ENCODE measurements at regions of chr3 and their contacts with region 1.

Region 1: DNA sequence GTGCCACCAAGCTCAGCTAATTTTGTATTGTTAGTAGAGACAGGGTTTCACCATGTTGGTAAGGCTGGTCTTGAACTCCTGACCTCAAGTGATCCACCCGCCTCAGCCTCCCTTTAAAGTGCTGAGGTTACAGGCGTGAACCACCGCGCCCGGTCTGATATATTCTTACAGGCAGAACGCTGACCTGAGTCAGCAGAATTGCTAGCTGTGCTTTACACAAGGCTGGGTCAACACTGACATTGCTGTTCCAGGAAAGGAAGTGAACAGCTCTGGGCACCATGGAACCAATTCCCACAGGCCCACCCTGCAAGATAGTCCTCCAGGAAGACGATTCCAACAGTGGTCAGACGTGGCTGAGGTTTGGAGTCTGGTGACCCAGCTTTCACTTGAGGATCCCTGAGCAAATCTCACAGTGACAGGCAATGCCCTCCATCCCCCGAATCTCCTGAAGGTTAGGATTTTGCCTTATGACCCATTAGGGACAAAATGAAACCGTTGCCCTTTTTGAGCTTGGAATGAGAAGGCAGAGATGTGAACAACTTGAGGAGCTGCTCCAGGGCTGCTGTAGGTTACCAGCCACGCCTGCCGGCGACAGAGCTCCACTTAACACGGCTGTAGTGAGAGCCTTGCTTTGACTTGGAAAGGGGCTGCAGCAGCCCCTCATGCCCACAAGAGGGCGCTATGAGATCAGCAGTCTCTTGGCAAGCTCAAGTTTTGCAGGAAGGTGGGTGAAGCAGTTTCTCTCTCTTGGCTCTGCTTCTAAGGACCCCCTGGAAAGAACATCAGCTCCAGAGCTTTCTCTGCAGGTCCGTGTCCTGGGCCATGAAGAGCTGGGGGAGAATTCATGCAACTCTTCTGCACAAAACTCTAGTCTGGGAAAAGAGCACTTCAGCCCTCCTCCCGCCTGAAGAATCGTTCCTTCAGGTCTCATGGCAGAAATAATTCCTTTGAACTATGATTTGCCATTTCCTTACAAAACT is 74.1 kb downstream of the SENP2 start:
- DNase-seq: peak; percentile 84
- H3K4me3 Mint-ChIP-seq: no peak overlapping the region
- H3K27ac Mint-ChIP-seq: peak overlapping the region; percentile 86
- H3K4me1 Mint-ChIP-seq: peaks cover 53% of the 10 kb centered on the region
- H3K27me3 Mint-ChIP-seq: no peaks in the 10 kb centered on the region
- CTCF ChIP-seq: peak; percentile 97

Region 2: GRCh38 chr3:185489462-185489861 is 170.8 kb before region 1 on chr3:
- CTCF ChIA-PET with region 1: no interaction called
- POLR2A ChIA-PET with region 1: no interaction called
- intact Hi-C with region 1: no loop called
- DNase-seq: no peak
- H3K4me3 Mint-ChIP-seq: no peak overlapping the region
- H3K27ac Mint-ChIP-seq: no peak overlapping the region
- H3K4me1 Mint-ChIP-seq: peaks cover 5% of the 10 kb centered on the region
- H3K27me3 Mint-ChIP-seq: no peaks in the 10 kb centered on the region
- CTCF ChIP-seq: no peak

Region 3: DNA sequence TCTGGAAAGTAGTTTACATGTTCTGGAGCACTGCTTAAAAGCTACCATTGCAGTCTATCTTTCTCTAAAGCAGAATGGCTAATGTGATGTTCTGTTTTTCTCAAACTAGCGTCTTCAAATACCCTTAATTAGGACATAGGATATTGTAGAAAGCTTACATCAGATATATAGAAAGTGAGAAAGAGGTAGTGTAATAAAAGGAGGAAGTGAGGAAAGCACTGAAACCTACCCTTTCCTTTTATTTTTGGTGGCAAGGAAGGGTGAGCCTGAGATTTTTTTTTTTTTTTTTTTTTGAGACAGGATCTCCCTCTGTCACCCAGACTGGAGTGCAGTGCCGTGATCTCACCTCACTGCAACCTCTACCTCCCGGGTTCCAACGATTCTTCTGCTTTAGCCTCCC is 64.7 kb before region 1 on chr3:
- CTCF ChIA-PET with region 1: interaction called, 11 read pairs
- POLR2A ChIA-PET with region 1: interaction called, 3 read pairs
- intact Hi-C with region 1: no loop called
- DNase-seq: no peak
- H3K4me3 Mint-ChIP-seq: no peak overlapping the region
- H3K27ac Mint-ChIP-seq: no peak overlapping the region
- H3K4me1 Mint-ChIP-seq: no peaks in the 10 kb centered on the region
- H3K27me3 Mint-ChIP-seq: no peaks in the 10 kb centered on the region
- CTCF ChIP-seq: no peak

Region 4: DNA sequence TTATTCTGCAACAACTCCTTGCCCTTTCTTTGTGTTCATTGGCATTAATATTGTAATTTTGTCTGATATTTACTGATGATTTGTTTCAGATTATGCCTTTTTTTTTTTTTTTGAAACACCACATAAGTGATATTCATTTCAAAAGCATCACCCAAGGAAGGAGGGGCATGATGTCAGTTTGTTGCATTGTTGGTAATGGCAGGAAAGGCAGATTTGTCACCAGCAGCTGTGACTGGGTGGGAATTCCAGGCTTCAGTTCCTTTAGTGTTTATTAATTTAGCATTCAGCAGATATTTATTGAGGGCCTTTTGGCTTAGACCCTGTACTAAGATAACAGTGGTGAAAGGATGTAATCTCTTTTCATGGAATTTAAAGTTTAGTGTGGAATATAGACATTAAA is 54.7 kb before region 1 on chr3:
- CTCF ChIA-PET with region 1: no interaction called
- POLR2A ChIA-PET with region 1: no interaction called
- intact Hi-C with region 1: no loop called
- DNase-seq: no peak
- H3K4me3 Mint-ChIP-seq: no peak overlapping the region
- H3K27ac Mint-ChIP-seq: no peak overlapping the region
- H3K4me1 Mint-ChIP-seq: no peaks in the 10 kb centered on the region
- H3K27me3 Mint-ChIP-seq: no peaks in the 10 kb centered on the region
- CTCF ChIP-seq: no peak

Region 5: DNA sequence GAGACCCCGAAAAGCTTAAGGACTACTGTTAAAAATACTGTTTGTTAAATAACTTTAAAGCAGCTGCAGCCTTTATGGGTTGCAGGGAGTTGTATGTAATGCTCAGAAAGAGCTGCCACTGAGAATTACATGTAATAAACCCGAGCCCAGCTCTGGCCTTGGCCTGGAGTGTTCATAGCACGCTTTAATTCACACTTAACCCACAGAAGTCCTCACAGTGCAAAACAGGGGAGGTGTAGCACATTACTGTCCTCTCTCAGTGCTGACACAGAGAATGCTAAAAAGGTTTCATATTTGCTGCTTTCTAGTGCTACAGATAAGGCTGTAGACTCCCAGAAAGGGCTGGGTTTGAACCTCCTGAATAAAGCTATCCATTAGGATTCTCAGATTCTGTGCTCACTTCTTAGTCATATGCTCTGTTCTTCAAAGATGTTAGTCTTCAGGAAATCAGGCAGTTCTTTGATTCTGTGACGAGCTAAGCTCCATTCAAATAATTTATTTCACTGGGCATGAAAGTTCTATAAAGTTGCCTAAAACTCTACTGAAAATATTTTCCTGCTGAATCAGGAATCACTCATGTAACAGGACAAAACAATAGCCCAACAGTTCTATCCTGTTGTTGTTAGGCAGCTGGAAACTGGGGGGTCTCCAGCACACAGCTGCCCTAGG is 33.9 kb after region 1 on chr3:
- CTCF ChIA-PET with region 1: interaction called, 10 read pairs
- POLR2A ChIA-PET with region 1: interaction called, 10 read pairs
- intact Hi-C with region 1: no loop called
- DNase-seq: no peak
- H3K4me3 Mint-ChIP-seq: no peak overlapping the region
- H3K27ac Mint-ChIP-seq: peak overlapping the region; percentile 35
- H3K4me1 Mint-ChIP-seq: peaks cover 8% of the 10 kb centered on the region
- H3K27me3 Mint-ChIP-seq: no peaks in the 10 kb centered on the region
- CTCF ChIP-seq: no peak

Region 6: DNA sequence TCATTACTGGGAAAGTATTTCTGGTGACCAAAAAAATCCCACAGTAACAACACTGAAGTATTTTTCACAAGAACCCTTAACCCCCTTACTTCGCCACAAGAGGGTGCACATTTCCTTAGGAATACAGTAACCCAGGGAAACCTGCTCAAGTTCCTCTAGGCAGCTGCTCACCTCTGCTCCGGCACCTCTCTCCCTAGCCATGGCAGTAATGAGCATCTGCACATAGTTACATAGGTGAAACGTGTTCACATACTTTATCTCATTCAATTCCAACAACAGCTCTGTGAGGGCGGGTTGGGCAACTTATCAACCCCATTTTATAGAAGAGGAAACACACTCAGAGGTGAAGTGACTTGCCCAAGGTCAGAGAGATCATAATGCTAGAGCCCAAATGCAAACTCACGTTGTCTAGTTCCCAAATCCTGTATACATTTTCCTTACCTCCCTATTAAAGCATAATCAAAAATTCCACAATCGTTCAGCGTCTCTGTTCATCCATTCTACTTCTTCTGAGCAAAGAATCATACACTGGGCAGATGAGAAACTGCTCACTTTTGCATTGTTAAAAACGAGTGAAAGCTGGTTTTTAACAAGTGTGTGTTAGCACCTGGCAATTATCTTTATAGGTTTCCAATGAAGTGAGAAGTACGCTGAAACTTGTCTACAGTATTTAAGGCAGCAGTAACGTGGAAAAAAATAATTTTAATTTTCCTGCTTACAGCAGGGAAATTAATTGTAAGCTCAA is 73.9 kb after region 1 on chr3:
- CTCF ChIA-PET with region 1: interaction called, 59 read pairs
- POLR2A ChIA-PET with region 1: interaction called, 55 read pairs
- intact Hi-C with region 1: loop called (anchors 1 kb)
- DNase-seq: peak; percentile 93
- H3K4me3 Mint-ChIP-seq: no peak overlapping the region
- H3K27ac Mint-ChIP-seq: peak overlapping the region; percentile 68
- H3K4me1 Mint-ChIP-seq: peaks cover 51% of the 10 kb centered on the region
- H3K27me3 Mint-ChIP-seq: no peaks in the 10 kb centered on the region
- CTCF ChIP-seq: peak; percentile 58

Region 7: DNA sequence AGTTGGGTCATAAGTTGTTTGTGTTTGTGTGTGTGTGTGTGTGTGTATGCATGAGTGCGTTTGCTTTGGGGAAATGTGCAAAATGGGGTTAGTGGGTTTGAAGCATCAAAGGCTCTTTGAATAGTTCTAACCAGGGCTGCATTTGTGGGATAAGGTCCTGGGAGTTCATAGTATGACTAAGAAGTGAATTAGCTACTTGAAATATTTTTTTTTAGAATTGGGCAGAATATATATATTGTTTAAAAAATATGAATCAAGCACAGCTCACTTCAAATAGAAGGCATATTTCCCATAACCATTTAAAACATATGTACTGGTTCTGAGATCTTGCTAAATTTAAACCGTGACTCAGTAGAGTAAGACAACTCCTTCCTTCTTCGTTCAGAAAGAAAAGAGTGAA is 121.5 kb after region 1 on chr3:
- CTCF ChIA-PET with region 1: interaction called, 13 read pairs
- POLR2A ChIA-PET with region 1: interaction called, 6 read pairs
- intact Hi-C with region 1: no loop called
- DNase-seq: peak; percentile 24
- H3K4me3 Mint-ChIP-seq: no peak overlapping the region
- H3K27ac Mint-ChIP-seq: peak overlapping the region; percentile 19
- H3K4me1 Mint-ChIP-seq: peaks cover 53% of the 10 kb centered on the region
- H3K27me3 Mint-ChIP-seq: no peaks in the 10 kb centered on the region
- CTCF ChIP-seq: no peak

Region 8: DNA sequence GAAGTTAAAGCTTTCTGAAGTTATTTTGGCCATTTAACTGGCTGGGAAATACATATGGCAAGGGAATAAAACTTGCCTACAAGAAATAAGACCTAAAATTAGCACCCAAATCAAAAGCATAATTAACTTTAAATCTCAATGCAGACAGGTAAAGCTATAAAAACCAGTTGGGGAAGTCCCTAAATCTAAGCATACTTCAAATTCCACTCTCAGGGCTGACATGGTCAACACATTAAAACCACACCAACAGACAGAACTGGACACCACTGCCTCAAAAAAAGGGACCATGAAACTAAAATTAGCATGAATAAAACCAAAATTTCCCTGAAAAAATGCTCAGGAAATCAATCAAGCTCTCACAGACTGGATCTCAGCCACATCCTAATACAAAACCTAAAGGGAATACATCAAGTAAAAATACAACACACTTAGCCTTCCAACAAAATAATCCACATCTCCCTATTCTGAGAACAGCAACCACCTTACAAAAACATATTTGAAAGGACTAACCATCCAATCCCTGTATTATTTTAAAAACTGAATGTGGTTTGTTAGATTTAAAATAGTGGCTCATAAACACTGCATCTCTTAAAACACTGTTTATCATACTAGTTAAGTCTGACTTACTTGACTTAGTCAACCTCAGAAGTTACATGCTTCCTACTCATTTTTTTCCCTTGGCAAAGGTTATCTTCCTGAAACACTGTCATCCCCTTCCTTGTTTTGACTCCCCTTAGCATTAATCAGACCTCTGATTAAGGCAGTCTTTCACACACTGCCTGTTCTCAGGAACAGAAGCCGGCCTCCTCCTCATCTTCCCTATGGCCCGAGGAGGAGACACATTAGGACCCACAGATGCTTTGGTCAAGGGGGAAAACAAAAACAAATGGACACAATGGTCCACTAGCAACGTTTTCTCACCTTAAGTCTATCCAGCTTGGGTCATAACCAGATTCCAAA is 269.2 kb after region 1 on chr3:
- CTCF ChIA-PET with region 1: interaction called, 11 read pairs
- POLR2A ChIA-PET with region 1: interaction called, 8 read pairs
- intact Hi-C with region 1: no loop called
- DNase-seq: no peak
- H3K4me3 Mint-ChIP-seq: peak overlapping the region; percentile 98
- H3K27ac Mint-ChIP-seq: peak overlapping the region; percentile 21
- H3K4me1 Mint-ChIP-seq: peaks cover 93% of the 10 kb centered on the region
- H3K27me3 Mint-ChIP-seq: no peaks in the 10 kb centered on the region
- CTCF ChIP-seq: no peak

Region 9: GRCh38 chr3:185976977-185977678 is 316.9 kb after region 1 on chr3:
- CTCF ChIA-PET with region 1: interaction called, 4 read pairs
- POLR2A ChIA-PET with region 1: no interaction called
- intact Hi-C with region 1: loop called (anchors 2 kb)
- DNase-seq: peak; percentile 72
- H3K4me3 Mint-ChIP-seq: no peak overlapping the region
- H3K27ac Mint-ChIP-seq: no peak overlapping the region
- H3K4me1 Mint-ChIP-seq: no peaks in the 10 kb centered on the region
- H3K27me3 Mint-ChIP-seq: no peaks in the 10 kb centered on the region
- CTCF ChIP-seq: peak; percentile 87